AG04449 (cell line): ENCODE measurements at regions of chr10 and their contacts with region 1.

Region 1: GRCh38 chr10:80055760-80056159 is 22.7 kb upstream of the TMEM254 start:
- DNase-seq: no peak
- H3K4me3 ChIP-seq: no peak overlapping the region
- CTCF ChIP-seq: no peak

Region 2: GRCh38 chr10:80070057-80070456 is 14.3 kb after region 1 on chr10:
- CTCF ChIA-PET with region 1: interaction called, 11 read pairs
- POLR2A ChIA-PET with region 1: no interaction called
- DNase-seq: no peak
- H3K4me3 ChIP-seq: no peak overlapping the region
- CTCF ChIP-seq: no peak

Region 3: DNA sequence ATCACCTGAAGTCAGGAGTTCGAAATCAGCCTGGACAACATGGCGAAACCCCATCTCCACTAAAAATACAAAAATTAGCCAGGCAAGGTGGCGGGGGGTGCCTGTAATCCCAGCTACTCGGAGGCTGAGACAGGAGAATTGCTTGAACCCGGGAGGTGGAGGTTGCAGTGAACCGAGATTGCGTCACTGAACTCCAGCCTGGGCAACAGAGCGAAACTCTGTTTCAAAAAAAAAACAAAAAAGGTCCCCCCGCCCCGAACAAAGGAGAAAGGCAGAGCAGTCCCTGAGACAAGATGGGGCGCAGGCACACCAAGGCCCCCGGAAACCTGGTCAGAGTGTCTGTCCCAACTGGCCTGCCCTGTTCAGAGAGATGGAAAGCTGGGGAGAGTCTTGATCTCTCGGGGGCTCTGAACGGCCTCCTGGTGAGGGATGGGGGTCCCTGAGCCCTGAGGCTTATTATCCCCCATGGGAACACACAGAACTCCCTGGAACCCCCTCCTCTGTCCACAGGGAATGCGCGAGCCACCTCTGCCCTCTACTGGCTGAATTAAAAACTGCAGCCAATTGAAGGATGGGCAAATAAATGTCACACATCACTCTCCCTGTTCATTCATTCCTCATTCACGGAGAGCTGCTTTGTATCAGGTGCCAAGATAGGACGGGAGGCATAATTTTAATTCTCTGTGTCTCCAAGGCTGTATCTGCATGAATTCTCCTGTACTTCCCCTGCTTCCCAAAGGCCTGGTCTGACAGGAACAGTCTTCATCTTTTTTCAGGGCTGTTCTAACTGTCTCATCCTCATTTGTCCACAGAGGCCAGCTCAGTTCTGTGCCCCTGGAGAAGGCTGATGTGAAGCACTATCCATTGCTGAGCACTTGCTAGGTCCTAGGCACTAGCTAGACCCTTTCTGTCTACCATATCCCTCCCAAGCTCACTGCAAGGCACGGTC is 204.8 kb after region 1 on chr10:
- CTCF ChIA-PET with region 1: interaction called, 12 read pairs
- POLR2A ChIA-PET with region 1: no interaction called
- DNase-seq: no peak
- H3K4me3 ChIP-seq: no peak overlapping the region
- CTCF ChIP-seq: peak; percentile 82